ENCODE measurements at regions of chr12 and their contacts with region 1.

Region 1: DNA sequence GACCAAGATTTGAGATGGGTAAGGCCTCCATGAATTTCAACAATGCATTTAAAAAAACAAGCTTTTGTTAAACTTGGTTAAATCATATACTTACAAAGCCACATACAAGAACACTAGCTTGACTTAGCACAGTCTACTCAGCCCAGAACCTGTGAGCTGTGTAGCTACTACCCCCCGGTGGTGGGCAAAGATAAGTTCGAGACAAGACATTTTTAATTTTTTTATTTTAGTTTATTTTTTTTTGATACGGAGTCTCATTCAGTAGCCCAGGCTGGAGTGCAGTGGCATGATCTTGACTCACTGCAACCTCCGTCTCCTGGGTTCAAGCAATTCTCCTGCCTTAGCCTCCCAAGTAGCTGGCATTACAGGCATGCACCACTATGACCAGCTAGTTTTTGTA is 3.7 kb upstream of the NECAP1 start:
- DNase-seq: peak in 8 of 9 donors; percentile 36 to 82 (median 78)
- ATAC-seq: peak; percentile 45
- H3K4me3 ChIP-seq: no peak overlapping the region
- H3K4me3 Mint-ChIP-seq: peak overlapping the region in 6 of 10 donors; percentile 18 to 49 (median 30)
- H3K27ac ChIP-seq: peak overlapping the region; percentile 94
- H3K27ac Mint-ChIP-seq: peak overlapping the region in 8 of 9 donors; percentile 86 to 100 (median 98)
- H3K4me1 ChIP-seq: peaks cover 21 to 40% of the 10 kb centered on the region in 2 donors
- H3K4me1 Mint-ChIP-seq: peaks cover 19 to 63% (median 41%) of the 10 kb centered on the region in 7 donors
- H3K27me3 ChIP-seq: no peaks in the 10 kb centered on the region
- H3K27me3 Mint-ChIP-seq: peaks cover 0 to 2% (median 0%) of the 10 kb centered on the region in 5 donors

Region 2: GRCh38 chr12:7638760-7639555 is 439.4 kb before region 1 on chr12:
- CTCF ChIA-PET with region 1: no interaction called
- POLR2A ChIA-PET with region 1: interaction called, 3 read pairs
- intact Hi-C with region 1: loop called in 1 of 2 experiments (anchors 1 kb)
- DNase-seq: peak; percentile 39 to 87 (median 85)
- ATAC-seq: peak; percentile 91
- H3K4me3 ChIP-seq: peak overlapping the region; percentile 34
- H3K4me3 Mint-ChIP-seq: peak overlapping the region; percentile 46 to 88 (median 74)
- H3K27ac ChIP-seq: peak overlapping the region; percentile 37
- H3K27ac Mint-ChIP-seq: peak overlapping the region; percentile 43 to 93 (median 80)
- H3K4me1 ChIP-seq: peaks cover 9 to 10% of the 10 kb centered on the region in 2 donors
- H3K4me1 Mint-ChIP-seq: peaks cover 10 to 47% (median 40%) of the 10 kb centered on the region in 7 donors
- H3K27me3 ChIP-seq: no peaks in the 10 kb centered on the region
- H3K27me3 Mint-ChIP-seq: peaks cover under 1 to 20% (median 7%) of the 10 kb centered on the region in 5 donors

Region 3: GRCh38 chr12:7650091-7650490 is 428.3 kb before region 1 on chr12:
- CTCF ChIA-PET with region 1: no interaction called
- POLR2A ChIA-PET with region 1: no interaction called
- intact Hi-C with region 1: no loop called
- DNase-seq: no peak
- ATAC-seq: no peak
- H3K4me3 ChIP-seq: no peak overlapping the region
- H3K4me3 Mint-ChIP-seq: no peak overlapping the region
- H3K27ac ChIP-seq: no peak overlapping the region
- H3K27ac Mint-ChIP-seq: no peak overlapping the region
- H3K4me1 ChIP-seq: no peaks in the 10 kb centered on the region
- H3K4me1 Mint-ChIP-seq: no peaks in the 10 kb centered on the region
- H3K27me3 ChIP-seq: no peaks in the 10 kb centered on the region
- H3K27me3 Mint-ChIP-seq: peaks cover 0 to 15% (median 0%) of the 10 kb centered on the region in 5 donors

Region 4: DNA sequence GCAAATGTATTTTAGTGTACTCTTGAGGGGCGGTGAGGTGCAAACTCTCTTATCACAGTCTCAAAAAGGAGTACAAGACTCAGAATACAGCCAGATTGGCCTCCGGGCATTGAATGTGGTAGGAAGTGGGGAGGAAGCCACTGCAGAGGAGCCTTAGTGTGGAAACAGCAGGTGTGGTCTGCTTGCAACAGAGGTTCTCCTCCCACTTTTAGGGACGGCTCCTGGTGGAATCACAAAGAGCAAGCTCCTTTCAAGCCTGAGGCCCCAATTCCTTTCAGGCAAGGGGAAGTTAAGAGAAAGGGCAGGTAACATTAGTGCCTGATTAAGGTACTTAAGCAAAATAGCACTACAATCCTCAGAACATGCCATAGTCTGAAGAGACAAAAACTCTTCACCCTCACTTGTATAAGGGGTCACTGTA is 118.7 kb before region 1 on chr12:
- CTCF ChIA-PET with region 1: interaction called, 3 read pairs
- POLR2A ChIA-PET with region 1: interaction called, 6 read pairs
- intact Hi-C with region 1: loop called in 1 of 2 experiments (anchors 1 kb)
- DNase-seq: peak in 8 of 9 donors; percentile 34 to 49 (median 40)
- ATAC-seq: peak; percentile 33
- H3K4me3 ChIP-seq: peak overlapping the region; percentile 79
- H3K4me3 Mint-ChIP-seq: peak overlapping the region; percentile 80 to 97 (median 89)
- H3K27ac ChIP-seq: peak overlapping the region; percentile 87
- H3K27ac Mint-ChIP-seq: peak overlapping the region; percentile 87 to 99 (median 95)
- H3K4me1 ChIP-seq: peaks cover 26 to 29% of the 10 kb centered on the region in 2 donors
- H3K4me1 Mint-ChIP-seq: peaks cover 27 to 51% (median 46%) of the 10 kb centered on the region in 7 donors
- H3K27me3 ChIP-seq: no peaks in the 10 kb centered on the region
- H3K27me3 Mint-ChIP-seq: no peaks in the 10 kb centered on the region

Region 5: DNA sequence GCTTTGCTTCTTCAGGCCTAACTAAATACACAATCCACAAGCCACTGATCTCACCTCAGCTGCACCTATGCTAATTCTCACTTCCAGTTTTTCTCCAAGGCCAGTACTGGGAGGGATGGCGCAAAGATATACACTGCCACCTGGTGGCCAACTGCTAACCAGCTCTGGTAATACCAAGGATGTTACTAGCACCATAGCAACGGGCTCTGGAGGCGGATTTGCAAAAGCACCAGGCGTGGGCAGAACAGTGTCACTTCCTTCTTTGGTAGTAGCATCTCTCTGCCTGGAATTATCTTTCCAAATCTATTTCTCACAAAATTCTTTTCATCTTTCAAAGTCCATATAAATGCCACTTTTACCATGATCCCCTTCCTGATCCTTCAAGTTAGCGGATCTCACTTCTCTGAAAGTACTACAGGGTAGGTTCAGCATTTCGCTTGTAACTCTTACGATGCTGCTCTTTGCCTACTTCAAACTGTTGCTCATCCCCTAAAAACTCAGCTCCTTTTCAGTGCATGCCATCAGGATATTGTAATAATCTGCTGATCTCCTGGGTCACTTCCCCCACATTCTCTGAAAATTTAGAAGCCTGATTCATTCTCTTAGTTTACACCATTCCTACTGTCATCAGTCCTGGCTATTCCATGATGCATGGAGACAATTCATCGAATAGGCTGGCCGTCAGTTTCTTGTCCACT is 83.0 kb before region 1 on chr12:
- CTCF ChIA-PET with region 1: interaction called, 12 read pairs
- POLR2A ChIA-PET with region 1: no interaction called
- intact Hi-C with region 1: loop called in 1 of 2 experiments (anchors 1 kb)
- DNase-seq: peak; percentile 39 to 89 (median 84)
- ATAC-seq: peak; percentile 100
- H3K4me3 ChIP-seq: no peak overlapping the region
- H3K4me3 Mint-ChIP-seq: no peak overlapping the region
- H3K27ac ChIP-seq: peak overlapping the region; percentile 60
- H3K27ac Mint-ChIP-seq: no peak overlapping the region
- H3K4me1 ChIP-seq: peaks cover 11 to 14% of the 10 kb centered on the region in 2 donors
- H3K4me1 Mint-ChIP-seq: peaks cover 9 to 28% (median 11%) of the 10 kb centered on the region in 7 donors
- H3K27me3 ChIP-seq: no peaks in the 10 kb centered on the region
- H3K27me3 Mint-ChIP-seq: no peaks in the 10 kb centered on the region

Region 6: GRCh38 chr12:8032242-8033152 is 45.9 kb before region 1 on chr12 and contains the start of gene FOXJ2:
- CTCF ChIA-PET with region 1: interaction called, 14 read pairs
- POLR2A ChIA-PET with region 1: interaction called, 178 read pairs
- intact Hi-C with region 1: loop called (anchors 1 kb)
- DNase-seq: peak; percentile 68 to 83 (median 78)
- ATAC-seq: peak; percentile 94
- H3K4me3 ChIP-seq: peak within 1 kb of the TSS; percentile 88
- H3K4me3 Mint-ChIP-seq: peak within 1 kb of the TSS; percentile 71 to 94 (median 91)
- H3K27ac ChIP-seq: peak within 1 kb of the TSS; percentile 100
- H3K27ac Mint-ChIP-seq: peak within 1 kb of the TSS; percentile 77 to 98 (median 94)
- H3K4me1 ChIP-seq: peaks cover 41 to 43% of the 10 kb centered on the region in 2 donors
- H3K4me1 Mint-ChIP-seq: peaks cover 49 to 63% (median 51%) of the 10 kb centered on the region in 7 donors
- H3K27me3 ChIP-seq: no peaks in the 10 kb centered on the region
- H3K27me3 Mint-ChIP-seq: peaks cover 0 to 2% (median 0%) of the 10 kb centered on the region in 5 donors
- total RNA-seq, gene FOXJ2: 19.8 to 30.2 (median 28.9) TPM

Region 7: GRCh38 chr12:8045952-8046944 is 32.1 kb before region 1 on chr12:
- CTCF ChIA-PET with region 1: interaction called, 158 read pairs
- POLR2A ChIA-PET with region 1: interaction called, 178 read pairs
- intact Hi-C with region 1: loop called (anchors 1 kb)
- DNase-seq: peak; percentile 60 to 85 (median 76)
- ATAC-seq: peak; percentile 96
- H3K4me3 ChIP-seq: no peak overlapping the region
- H3K4me3 Mint-ChIP-seq: no peak overlapping the region
- H3K27ac ChIP-seq: no peak overlapping the region
- H3K27ac Mint-ChIP-seq: peak overlapping the region in 5 of 9 donors; percentile 57 to 80 (median 63)
- H3K4me1 ChIP-seq: no peaks in the 10 kb centered on the region
- H3K4me1 Mint-ChIP-seq: peaks cover 10 to 19% (median 12%) of the 10 kb centered on the region in 7 donors
- H3K27me3 ChIP-seq: no peaks in the 10 kb centered on the region
- H3K27me3 Mint-ChIP-seq: no peaks in the 10 kb centered on the region

Region 8: DNA sequence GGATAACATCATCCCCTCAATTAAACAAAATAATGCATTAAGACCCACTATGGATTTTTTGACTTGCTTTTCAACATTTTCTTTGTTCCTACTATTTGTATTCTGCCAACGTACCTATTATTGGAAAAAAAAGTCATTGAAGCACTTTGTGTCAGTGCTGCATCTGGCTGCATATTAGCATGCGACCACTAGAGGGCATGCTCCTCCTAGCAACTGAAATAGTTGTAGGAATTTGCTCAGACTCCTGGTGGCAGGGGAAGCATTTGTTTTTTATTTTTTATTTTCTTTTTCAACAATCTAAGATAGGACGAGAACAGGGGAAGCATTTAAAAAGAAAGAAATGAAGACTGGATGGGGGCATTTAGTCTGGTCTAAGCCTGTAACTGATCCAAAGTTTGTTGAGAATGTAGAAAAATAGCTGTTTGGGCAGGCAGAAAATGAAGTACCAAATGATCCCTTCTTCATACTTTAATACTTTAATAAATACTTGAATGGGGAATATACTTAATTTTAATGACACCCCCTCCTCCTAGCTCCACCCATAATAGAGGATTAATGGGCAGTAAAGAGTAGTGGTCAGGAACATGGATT is 30.5 kb after region 1 on chr12:
- CTCF ChIA-PET with region 1: no interaction called
- POLR2A ChIA-PET with region 1: interaction called, 5 read pairs
- intact Hi-C with region 1: loop called in 1 of 2 experiments (anchors 2 kb)
- DNase-seq: peak; percentile 47 to 84 (median 71)
- ATAC-seq: peak; percentile 99
- H3K4me3 ChIP-seq: no peak overlapping the region
- H3K4me3 Mint-ChIP-seq: no peak overlapping the region
- H3K27ac ChIP-seq: no peak overlapping the region
- H3K27ac Mint-ChIP-seq: peak overlapping the region in 3 of 9 donors; percentile 0 to 38 (median 22)
- H3K4me1 ChIP-seq: no peaks in the 10 kb centered on the region
- H3K4me1 Mint-ChIP-seq: peaks cover 0 to 6% (median 5%) of the 10 kb centered on the region in 7 donors
- H3K27me3 ChIP-seq: no peaks in the 10 kb centered on the region
- H3K27me3 Mint-ChIP-seq: no peaks in the 10 kb centered on the region

Region 9: GRCh38 chr12:8145754-8146441 is 67.5 kb after region 1 on chr12:
- CTCF ChIA-PET with region 1: no interaction called
- POLR2A ChIA-PET with region 1: no interaction called
- intact Hi-C with region 1: no loop called
- DNase-seq: no peak
- ATAC-seq: no peak
- H3K4me3 ChIP-seq: no peak overlapping the region
- H3K4me3 Mint-ChIP-seq: no peak overlapping the region
- H3K27ac ChIP-seq: no peak overlapping the region
- H3K27ac Mint-ChIP-seq: no peak overlapping the region
- H3K4me1 ChIP-seq: no peaks in the 10 kb centered on the region
- H3K4me1 Mint-ChIP-seq: no peaks in the 10 kb centered on the region
- H3K27me3 ChIP-seq: no peaks in the 10 kb centered on the region
- H3K27me3 Mint-ChIP-seq: peaks cover 0 to 45% (median 0%) of the 10 kb centered on the region in 5 donors